Gastrocnemius medialis (tissue), 4 donors: ENCODE measurements at regions of chr7 and their contacts with region 1.

Region 1: DNA sequence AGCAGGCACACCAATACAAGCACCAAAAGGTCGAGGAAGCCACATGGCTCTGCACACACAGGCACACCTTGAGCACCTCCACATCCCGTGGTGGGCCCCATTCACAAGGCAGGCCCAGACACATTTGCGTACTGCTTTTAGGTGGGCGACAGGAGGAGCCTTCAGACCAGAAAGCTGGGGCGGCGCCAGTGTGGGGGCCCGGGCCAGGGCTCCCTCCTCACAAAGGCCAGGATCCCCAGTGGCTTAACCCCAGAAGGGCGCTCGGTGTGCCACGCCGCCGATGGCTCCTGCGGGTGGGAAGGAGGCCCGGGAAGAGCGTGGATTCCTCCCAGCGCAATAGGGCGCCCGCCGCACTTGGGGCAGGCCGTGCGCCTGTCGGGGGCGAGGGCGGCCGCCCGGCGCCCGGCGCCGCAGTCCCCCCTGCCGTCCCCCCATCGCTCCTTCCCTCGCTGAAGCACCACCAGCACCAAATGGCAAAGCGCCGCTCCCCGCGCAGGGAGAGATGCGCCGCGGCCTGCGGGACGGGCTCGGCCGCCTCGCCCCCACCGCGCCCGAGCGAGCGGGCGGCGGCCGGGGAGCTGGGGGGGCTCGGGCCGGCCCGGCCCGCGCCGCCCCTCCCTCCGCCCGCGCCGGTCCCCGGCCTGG is 3.0 kb upstream of the SMARCD3 start:
- DNase-seq: peak in 1 of 2 donors; percentile 43
- ATAC-seq: peak in 1 of 2 donors; percentile 9
- H3K4me3 ChIP-seq: peak overlapping the region; percentile 55 to 94 (median 78)
- H3K27ac ChIP-seq: peak overlapping the region; percentile 92 to 100 (median 98)
- H3K4me1 ChIP-seq: peaks cover 38 to 49% of the 10 kb centered on the region in 2 donors
- H3K27me3 ChIP-seq: no peaks in the 10 kb centered on the region
- CTCF ChIP-seq: no peak
- POLR2A ChIP-seq: no peak

Region 2: DNA sequence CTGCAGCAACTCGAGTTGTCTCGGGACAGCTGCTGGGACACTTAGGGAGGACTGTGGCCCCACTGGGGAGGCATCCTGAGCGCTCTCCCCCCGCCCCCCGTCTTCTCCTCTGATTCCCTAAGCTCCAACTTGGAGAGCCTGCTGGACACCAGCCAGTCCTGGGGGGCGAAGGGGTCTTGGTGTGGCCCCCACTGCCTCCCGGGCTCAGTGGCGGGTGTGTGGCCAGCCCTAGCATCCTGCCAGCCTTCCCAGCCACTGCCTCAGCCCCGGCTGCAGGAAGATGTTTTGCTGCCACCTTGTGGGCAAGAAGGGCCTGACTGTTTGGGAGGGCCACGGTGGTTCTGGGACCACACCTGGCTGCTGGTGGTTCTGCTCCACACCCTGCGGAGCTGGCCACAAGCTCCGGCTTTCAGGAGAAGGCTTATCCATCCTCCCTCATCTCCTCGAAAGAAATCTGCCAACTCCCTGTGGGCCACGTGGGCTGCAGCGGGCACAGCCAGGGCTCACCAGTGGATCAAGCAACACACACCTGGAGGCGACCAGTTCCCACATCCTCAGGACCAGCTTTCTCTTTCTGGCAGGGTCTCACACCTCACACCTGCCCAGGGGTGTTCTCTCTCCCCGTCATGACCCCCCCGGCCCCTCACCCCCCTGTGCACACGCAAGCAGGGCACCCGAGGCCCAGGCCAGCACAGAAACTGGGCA is 140.4 kb before region 1 on chr7:
- in situ Hi-C with region 1: no loop called
- intact Hi-C with region 1: no loop called
- DNase-seq: peak; percentile 54 to 66
- ATAC-seq: peak; percentile 87 to 89
- H3K4me3 ChIP-seq: no peak overlapping the region
- H3K27ac ChIP-seq: no peak overlapping the region
- H3K4me1 ChIP-seq: peaks cover 4 to 5% of the 10 kb centered on the region in 2 donors
- H3K27me3 ChIP-seq: no peaks in the 10 kb centered on the region
- CTCF ChIP-seq: peak; percentile 82 to 96 (median 89)
- POLR2A ChIP-seq: no peak

Region 3: GRCh38 chr7:151276666-151277590 is 25.5 kb after region 1 on chr7:
- in situ Hi-C with region 1: no loop called
- intact Hi-C with region 1: no loop called
- DNase-seq: no peak
- ATAC-seq: peak; percentile 33 to 36
- H3K4me3 ChIP-seq: peak overlapping the region; percentile 38 to 43 (median 40)
- H3K27ac ChIP-seq: no peak overlapping the region
- H3K4me1 ChIP-seq: peaks cover 5 to 17% of the 10 kb centered on the region in 2 donors
- H3K27me3 ChIP-seq: no peaks in the 10 kb centered on the region
- CTCF ChIP-seq: no peak
- POLR2A ChIP-seq: peak in 1 of 2 donors; percentile 8

Region 4: GRCh38 chr7:151341357-151342101 is 90.1 kb after region 1 on chr7 and contains the start of gene NUB1:
- in situ Hi-C with region 1: no loop called
- intact Hi-C with region 1: loop called (anchors 5 kb)
- DNase-seq: peak; percentile 88 to 89
- ATAC-seq: peak; percentile 96 to 97
- H3K4me3 ChIP-seq: peak within 1 kb of the TSS; percentile 72 to 77 (median 74)
- H3K27ac ChIP-seq: peak within 1 kb of the TSS; percentile 73 to 90 (median 86)
- H3K4me1 ChIP-seq: peaks cover 9 to 20% of the 10 kb centered on the region in 2 donors
- H3K27me3 ChIP-seq: no peaks in the 10 kb centered on the region
- CTCF ChIP-seq: no peak
- POLR2A ChIP-seq: peak; percentile 88 to 93
- total RNA-seq, gene NUB1: 45.3 to 59.0 (median 49.7) TPM